PC-9 (cell line): ENCODE measurements at regions of chr6 and their contacts with region 1.

Region 1: DNA sequence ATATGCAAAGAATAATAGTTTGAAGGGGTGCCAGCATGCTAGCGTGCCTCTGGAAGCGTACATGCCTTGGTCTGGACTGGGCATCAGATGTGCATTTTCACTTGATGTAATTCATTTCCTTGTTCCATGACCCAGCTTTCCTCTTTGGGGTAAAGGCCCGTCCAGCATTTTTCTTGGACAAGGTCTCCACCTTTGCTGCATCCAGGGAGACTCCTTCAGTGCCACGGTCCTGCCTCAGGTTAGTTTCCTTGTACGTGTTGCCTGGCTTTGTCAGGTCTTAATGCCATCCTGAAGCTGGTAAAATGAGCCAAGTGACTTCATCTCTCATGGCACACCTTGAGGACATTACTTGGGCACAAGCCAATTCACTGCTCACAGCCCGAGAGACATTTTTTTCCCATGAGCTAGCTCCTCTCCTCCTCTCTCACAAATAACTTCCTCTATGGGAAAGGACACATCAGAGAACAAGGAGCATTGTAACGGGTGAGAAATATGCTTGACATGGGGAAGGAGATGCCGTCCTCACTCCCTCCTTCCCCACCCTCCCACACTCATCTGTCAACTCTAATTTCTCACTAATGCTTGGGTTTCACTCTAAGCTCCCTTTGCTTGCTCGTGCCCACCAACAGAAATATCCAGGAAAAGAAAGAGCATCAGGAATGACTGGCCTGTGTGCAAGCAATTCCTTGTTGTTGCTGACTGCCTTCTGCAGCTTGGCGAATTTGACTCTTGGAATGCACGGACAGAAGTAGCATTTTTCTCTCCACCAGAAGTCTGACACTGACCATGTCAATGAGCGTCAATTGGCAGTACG is 24.0 kb downstream of the EDN1 start:
- DNase-seq: peak; percentile 87 to 100
- H3K4me3 ChIP-seq: peak overlapping the region; percentile 30; the same call in 1 of the 2 replicates
- H3K27ac ChIP-seq: peak overlapping the region; percentile 88
- H3K4me1 ChIP-seq: peaks cover 27% of the 10 kb centered on the region
- H3K27me3 ChIP-seq: no peaks in the 10 kb centered on the region
- CTCF ChIP-seq: no peak

Region 2: DNA sequence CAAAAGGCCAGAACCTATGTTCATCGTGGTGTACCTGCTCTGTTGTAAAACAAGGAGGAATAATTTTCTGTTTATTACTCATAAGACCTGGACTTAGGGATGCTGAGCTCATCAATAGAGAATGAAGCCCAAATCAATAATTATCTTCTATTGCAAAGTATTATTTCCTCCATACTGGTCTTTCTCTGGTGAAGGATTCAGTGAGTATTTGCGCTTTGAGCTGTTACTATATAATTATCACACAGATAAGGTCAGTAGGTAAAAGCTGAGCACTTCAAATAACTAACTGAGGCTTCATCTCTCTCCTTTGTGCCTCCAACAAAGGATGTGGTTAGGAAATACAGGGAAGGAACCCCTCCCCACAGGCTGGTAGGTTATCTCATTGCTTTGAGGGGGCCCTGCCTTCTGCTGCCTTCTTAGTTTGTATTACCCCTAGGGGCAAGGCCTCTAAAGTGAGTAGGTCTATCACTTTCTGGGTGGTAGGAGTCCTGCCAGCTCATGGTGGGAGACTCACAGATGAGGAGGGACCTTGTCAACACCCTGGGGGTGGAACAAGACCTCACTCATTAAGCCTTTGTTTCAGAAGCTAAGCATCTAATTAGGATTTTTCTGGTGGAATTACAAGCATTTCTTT is 10.4 kb after region 1 on chr6:
- CTCF ChIA-PET with region 1: interaction called, 7 read pairs
- POLR2A ChIA-PET with region 1: interaction called, 58 read pairs
- intact Hi-C with region 1: loop called (anchors 1 kb)
- DNase-seq: peak; percentile 31 to 56
- H3K4me3 ChIP-seq: peak overlapping the region; percentile 6; the same call in 1 of the 2 replicates
- H3K27ac ChIP-seq: peak overlapping the region; percentile 95
- H3K4me1 ChIP-seq: peaks cover 41% of the 10 kb centered on the region
- H3K27me3 ChIP-seq: no peaks in the 10 kb centered on the region
- CTCF ChIP-seq: no peak

Region 3: DNA sequence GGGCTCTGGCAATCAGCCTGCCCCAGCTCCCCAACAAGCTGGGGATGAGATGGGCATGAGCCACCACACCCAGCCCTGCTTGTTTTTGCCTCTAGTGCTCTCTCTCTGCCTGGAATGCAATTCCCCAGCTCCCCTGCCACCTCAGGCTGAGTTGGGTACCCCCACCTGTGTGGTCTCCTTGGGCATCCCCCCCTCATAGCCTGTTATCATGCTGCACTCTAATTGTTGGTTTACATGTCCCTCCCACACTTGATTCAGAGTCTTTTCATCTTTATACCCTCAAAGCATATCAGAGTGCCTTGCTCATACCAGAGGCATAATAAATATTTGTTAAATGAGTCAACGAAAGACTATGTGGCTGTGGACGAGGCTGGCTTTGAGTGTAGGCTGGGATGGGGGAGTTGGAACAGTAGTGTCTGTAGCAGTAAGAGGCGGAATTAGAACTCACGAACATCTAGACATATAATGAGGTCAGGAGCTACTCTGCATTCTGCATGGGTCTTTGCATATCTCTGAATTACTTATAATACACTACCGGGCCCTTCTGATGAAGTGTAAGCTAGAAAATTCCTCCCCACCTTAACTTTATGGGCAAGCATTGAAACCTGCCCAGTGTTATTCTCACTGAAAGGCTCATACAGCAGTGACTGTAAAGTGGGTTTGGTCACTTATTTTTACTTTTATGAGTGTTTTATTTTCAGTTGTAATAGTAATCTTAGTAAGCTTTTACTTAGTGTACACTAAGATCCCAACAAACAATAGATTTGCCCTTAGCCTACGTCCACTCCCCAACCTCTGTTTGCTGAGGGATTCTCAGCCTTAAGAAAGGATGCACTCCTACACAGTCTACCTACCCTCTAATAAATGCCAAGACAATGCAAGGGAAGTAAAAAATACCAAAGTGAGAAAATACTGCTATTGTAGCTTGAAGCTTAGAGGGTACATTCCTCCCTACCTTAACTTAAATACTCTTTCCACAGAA is 34.6 kb after region 1 on chr6:
- CTCF ChIA-PET with region 1: no interaction called
- POLR2A ChIA-PET with region 1: no interaction called
- intact Hi-C with region 1: loop called (anchors 2 kb)
- DNase-seq: peak; percentile 80 to 97
- H3K4me3 ChIP-seq: no peak overlapping the region
- H3K27ac ChIP-seq: peak overlapping the region; percentile 28
- H3K4me1 ChIP-seq: peaks cover 21% of the 10 kb centered on the region
- H3K27me3 ChIP-seq: no peaks in the 10 kb centered on the region
- CTCF ChIP-seq: no peak

Region 4: DNA sequence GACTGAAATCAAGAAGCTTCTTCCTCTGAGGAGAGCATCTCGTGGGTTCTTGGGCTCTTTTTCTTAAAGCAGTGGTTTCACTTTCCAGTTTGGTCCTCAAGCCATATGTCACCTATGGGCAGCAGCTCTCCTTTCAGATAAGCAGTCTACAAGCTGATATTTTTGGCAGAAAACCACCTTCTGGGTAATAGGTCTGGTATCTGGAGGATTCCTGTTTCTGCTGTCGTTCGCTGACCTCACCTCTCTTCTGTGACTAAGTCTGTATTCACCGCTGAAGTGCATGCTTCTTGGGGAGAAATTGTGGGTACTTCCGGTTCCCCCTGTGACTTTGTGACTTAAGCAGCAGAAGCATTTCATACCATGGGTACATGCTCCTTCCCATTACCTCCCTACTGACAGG is 169.5 kb after region 1 on chr6:
- CTCF ChIA-PET with region 1: no interaction called
- POLR2A ChIA-PET with region 1: interaction called, 4 read pairs
- intact Hi-C with region 1: loop called (anchors 5 kb)
- DNase-seq: peak; percentile 70 to 99
- H3K4me3 ChIP-seq: peak overlapping the region; percentile 35; the same call in 1 of the 2 replicates
- H3K27ac ChIP-seq: peak overlapping the region; percentile 82
- H3K4me1 ChIP-seq: peaks cover 30% of the 10 kb centered on the region
- H3K27me3 ChIP-seq: no peaks in the 10 kb centered on the region
- CTCF ChIP-seq: no peak

Region 5: GRCh38 chr6:12592634-12593033 is 278.4 kb after region 1 on chr6:
- CTCF ChIA-PET with region 1: no interaction called
- POLR2A ChIA-PET with region 1: no interaction called
- intact Hi-C with region 1: loop called (anchors 1 kb)
- DNase-seq: peak; percentile 53 to 85
- H3K4me3 ChIP-seq: no peak overlapping the region
- H3K27ac ChIP-seq: no peak overlapping the region
- H3K4me1 ChIP-seq: peaks cover 19% of the 10 kb centered on the region
- H3K27me3 ChIP-seq: no peaks in the 10 kb centered on the region
- CTCF ChIP-seq: no peak